Uterus (tissue), 4 donors: ENCODE measurements at regions of chr19 and their contacts with region 1.

Region 1: GRCh38 chr19:34145741-34146202 is 26.5 kb upstream of the LSM14A start:
- DNase-seq: peak; percentile 23 to 29
- H3K4me3 ChIP-seq: no peak overlapping the region
- H3K27ac ChIP-seq: no peak overlapping the region
- H3K4me1 ChIP-seq: no peaks in the 10 kb centered on the region
- H3K27me3 ChIP-seq: no peaks in the 10 kb centered on the region
- CTCF ChIP-seq: peak; percentile 66 to 72 (median 71)
- POLR2A ChIP-seq: no peak

Region 2: GRCh38 chr19:33778089-33778791 is 367.5 kb before region 1 on chr19:
- intact Hi-C with region 1: loop called (anchors 5 kb)
- DNase-seq: peak; percentile 67 to 85
- H3K4me3 ChIP-seq: no peak overlapping the region
- H3K27ac ChIP-seq: no peak overlapping the region
- H3K4me1 ChIP-seq: no peaks in the 10 kb centered on the region
- H3K27me3 ChIP-seq: peaks cover 0 to 4% of the 10 kb centered on the region in 2 donors
- CTCF ChIP-seq: peak; percentile 99 to 100 (median 100)
- POLR2A ChIP-seq: peak in 1 of 2 donors; percentile 50

Region 3: GRCh38 chr19:33998739-33999345 is 146.9 kb before region 1 on chr19:
- intact Hi-C with region 1: no loop called
- DNase-seq: no peak
- H3K4me3 ChIP-seq: no peak overlapping the region
- H3K27ac ChIP-seq: no peak overlapping the region
- H3K4me1 ChIP-seq: no peaks in the 10 kb centered on the region
- H3K27me3 ChIP-seq: no peaks in the 10 kb centered on the region
- CTCF ChIP-seq: peak; percentile 27 to 34 (median 32)
- POLR2A ChIP-seq: no peak